HepG2 (cell line): ENCODE measurements at regions of chr1 and their contacts with region 1.

Region 1: DNA sequence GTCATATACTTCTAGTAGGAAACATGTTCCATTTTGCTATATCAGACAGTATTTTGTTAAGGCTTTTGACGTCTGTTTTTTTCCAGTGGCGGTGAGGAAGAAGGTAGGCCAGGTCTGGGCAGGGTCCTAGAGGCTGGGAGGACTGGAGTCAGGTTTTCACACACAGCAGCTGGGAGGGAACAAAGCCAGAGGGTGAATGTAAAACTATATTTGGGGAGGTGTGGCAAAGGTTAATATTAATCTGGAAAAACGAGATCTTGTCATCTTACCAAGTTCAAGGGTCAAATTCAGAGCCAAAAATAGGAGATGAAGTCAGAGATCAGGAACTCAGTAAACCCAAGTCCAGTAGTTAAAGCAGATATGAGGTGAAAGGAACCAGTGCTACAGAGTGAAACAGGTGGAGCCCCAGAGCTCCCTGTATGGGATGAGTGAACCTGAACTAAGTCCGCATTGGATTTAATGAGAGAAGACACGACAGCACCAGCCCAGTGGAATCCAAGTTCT is 10.7 kb upstream of the OTUD7B start:
- DNase-seq: peak; percentile 95
- ATAC-seq: peak; percentile 98
- H3K4me3 ChIP-seq: peak overlapping the region in 1 of 3 experiments; percentile 12; a peak in 1 of 6 replicates
- H3K27ac ChIP-seq: peak overlapping the region; percentile 61
- H3K4me1 ChIP-seq: peaks cover 36% of the 10 kb centered on the region
- H3K27me3 ChIP-seq: no peaks in the 10 kb centered on the region
- CTCF ChIP-seq: peak; percentile 18; the same call in 1 of the 2 replicates
- EP300 ChIP-seq: peak in 1 of 2 experiments; percentile 54; a peak in 2 of 4 replicates
- POLR2A ChIP-seq: peak in 1 of 2 experiments; percentile 56; a peak in 1 of 4 replicates
- RAD21 ChIP-seq: no peak

Region 2: GRCh38 chr1:149978547-149979023 is 42.7 kb before region 1 on chr1:
- CTCF ChIA-PET with region 1: no interaction called
- POLR2A ChIA-PET with region 1: no interaction called
- in situ Hi-C with region 1: no loop called
- intact Hi-C with region 1: loop called (anchors 5 kb)
- DNase-seq: peak; percentile 86
- ATAC-seq: peak; percentile 85
- H3K4me3 ChIP-seq: no peak overlapping the region
- H3K27ac ChIP-seq: peak overlapping the region; percentile 22
- H3K4me1 ChIP-seq: peaks cover 44% of the 10 kb centered on the region
- H3K27me3 ChIP-seq: no peaks in the 10 kb centered on the region
- CTCF ChIP-seq: no peak
- EP300 ChIP-seq: 0 out of 4 replicates have a peak, but pooled peaks of 1 of the 2 experiments have one; percentile 11
- POLR2A ChIP-seq: no peak
- RAD21 ChIP-seq: no peak

Region 3: GRCh38 chr1:150221552-150221951 is 200.3 kb after region 1 on chr1:
- CTCF ChIA-PET with region 1: no interaction called
- POLR2A ChIA-PET with region 1: no interaction called
- in situ Hi-C with region 1: no loop called
- intact Hi-C with region 1: no loop called
- DNase-seq: no peak
- ATAC-seq: no peak
- H3K4me3 ChIP-seq: no peak overlapping the region
- H3K27ac ChIP-seq: no peak overlapping the region
- H3K4me1 ChIP-seq: no peaks in the 10 kb centered on the region
- H3K27me3 ChIP-seq: no peaks in the 10 kb centered on the region
- CTCF ChIP-seq: no peak
- EP300 ChIP-seq: no peak
- POLR2A ChIP-seq: no peak
- RAD21 ChIP-seq: no peak